K562 (cell line): ENCODE measurements at regions of chr13 and their contacts with region 1.

Region 1: GRCh38 chr13:29362849-29363604 is 232.5 kb downstream of the SLC7A1 start:
- DNase-seq: peak; percentile 47 to 57 (median 48)
- ATAC-seq: peak; percentile 94
- H3K4me3 ChIP-seq: no peak overlapping the region
- H3K27ac ChIP-seq: no peak overlapping the region
- H3K4me1 ChIP-seq: 0 out of 5 replicates have a peak, but pooled peaks cover 0 to 3% of the 10 kb centered on the region in 2 experiments
- H3K27me3 ChIP-seq: peaks cover 0 to 16% of the 10 kb centered on the region in 2 experiments; a peak in 3 of 5 replicates
- CTCF ChIP-seq: peak; percentile 69 to 83 (median 80)
- EP300 ChIP-seq: no peak
- POLR2A ChIP-seq: no peak
- RAD21 ChIP-seq: peak; percentile 43 to 72

Region 2: GRCh38 chr13:28805193-28805819 is 557.7 kb before region 1 on chr13:
- CTCF ChIA-PET with region 1: no interaction called
- POLR2A ChIA-PET with region 1: no interaction called
- in situ Hi-C with region 1: loop called (anchors 25 kb)
- intact Hi-C with region 1: loop called (anchors 10 kb)
- DNase-seq: peak; percentile 19 to 48 (median 20)
- ATAC-seq: peak; percentile 82
- H3K4me3 ChIP-seq: no peak overlapping the region
- H3K27ac ChIP-seq: no peak overlapping the region
- H3K4me1 ChIP-seq: no peaks in the 10 kb centered on the region
- H3K27me3 ChIP-seq: no peaks in the 10 kb centered on the region
- CTCF ChIP-seq: peak; percentile 46 to 67 (median 61)
- EP300 ChIP-seq: no peak
- POLR2A ChIP-seq: no peak
- RAD21 ChIP-seq: peak in 1 of 2 experiments; percentile 65; a peak in 2 of 4 replicates

Region 3: GRCh38 chr13:28819735-28820098 is 543.3 kb before region 1 on chr13:
- CTCF ChIA-PET with region 1: no interaction called
- POLR2A ChIA-PET with region 1: no interaction called
- in situ Hi-C with region 1: loop called (anchors 25 kb)
- intact Hi-C with region 1: no loop called
- DNase-seq: peak; percentile 61 to 78 (median 76)
- ATAC-seq: peak; percentile 99
- H3K4me3 ChIP-seq: peak overlapping the region; percentile 8; the same call in 1 of the 2 replicates
- H3K27ac ChIP-seq: no peak overlapping the region
- H3K4me1 ChIP-seq: peaks cover 0 to 13% of the 10 kb centered on the region in 2 experiments; a peak in 2 of 5 replicates
- H3K27me3 ChIP-seq: peaks cover 0 to 16% of the 10 kb centered on the region in 2 experiments; a peak in 2 of 5 replicates
- CTCF ChIP-seq: peak in 2 of 3 experiments; percentile 52 to 83; a peak in 4 of 6 replicates
- EP300 ChIP-seq: no peak
- POLR2A ChIP-seq: no peak
- RAD21 ChIP-seq: peak in 1 of 2 experiments; percentile 48; a peak in 2 of 4 replicates

Region 4: GRCh38 chr13:29301027-29301426 is 62.0 kb before region 1 on chr13:
- CTCF ChIA-PET with region 1: no interaction called
- POLR2A ChIA-PET with region 1: no interaction called
- in situ Hi-C with region 1: no loop called
- intact Hi-C with region 1: no loop called
- DNase-seq: no peak
- ATAC-seq: no peak
- H3K4me3 ChIP-seq: no peak overlapping the region
- H3K27ac ChIP-seq: no peak overlapping the region
- H3K4me1 ChIP-seq: no peaks in the 10 kb centered on the region
- H3K27me3 ChIP-seq: no peaks in the 10 kb centered on the region
- CTCF ChIP-seq: no peak
- EP300 ChIP-seq: no peak
- POLR2A ChIP-seq: no peak
- RAD21 ChIP-seq: no peak